ENCODE measurements at regions of chrX and their contacts with region 1.

Region 1: GRCh38 chrX:32788936-32789335 is 422.4 kb downstream of the DMD start:
- DNase-seq: no peak
- ATAC-seq: no peak
- H3K4me3 ChIP-seq: no peak overlapping the region
- H3K27ac ChIP-seq: no peak overlapping the region
- H3K4me1 ChIP-seq: no peaks in the 10 kb centered on the region
- H3K27me3 ChIP-seq: no peaks in the 10 kb centered on the region
- CTCF ChIP-seq: no peak
- POLR2A ChIP-seq: no peak
- RAD21 ChIP-seq: no peak

Region 2: DNA sequence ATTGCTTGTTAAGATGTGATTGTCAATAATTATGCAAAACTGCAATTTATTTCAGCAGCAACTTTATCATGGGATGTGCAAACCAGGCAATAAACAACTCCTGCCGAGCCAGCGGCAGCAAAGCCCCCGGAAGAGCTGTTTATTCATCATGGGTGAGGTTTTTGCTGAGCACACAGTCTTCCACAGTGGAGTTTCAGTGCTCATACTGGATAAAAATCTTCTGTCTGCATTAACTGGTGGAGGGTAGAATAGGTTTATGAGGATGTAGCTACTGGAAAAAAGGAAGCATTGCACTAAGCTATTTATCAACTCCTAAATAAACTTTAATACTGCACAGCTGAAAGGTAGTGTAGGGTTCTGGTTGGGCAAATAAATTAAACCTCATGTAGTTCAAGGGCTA is 1159.7 kb before region 1 on chrX:
- CTCF ChIA-PET with region 1: no interaction called
- POLR2A ChIA-PET with region 1: no interaction called
- dilution Hi-C with region 1: no loop called
- in situ Hi-C with region 1: no loop called
- intact Hi-C with region 1: no loop called
- DNase-seq: no peak
- ATAC-seq: no peak
- H3K4me3 ChIP-seq: no peak overlapping the region
- H3K27ac ChIP-seq: no peak overlapping the region
- H3K4me1 ChIP-seq: no peaks in the 10 kb centered on the region
- H3K27me3 ChIP-seq: peaks cover 2% of the 10 kb centered on the region; the same call in 1 of the 2 replicates
- CTCF ChIP-seq: no peak
- POLR2A ChIP-seq: no peak
- RAD21 ChIP-seq: no peak

Region 3: GRCh38 chrX:31679861-31680260 is 1109.1 kb before region 1 on chrX:
- CTCF ChIA-PET with region 1: no interaction called
- POLR2A ChIA-PET with region 1: no interaction called
- dilution Hi-C with region 1: no loop called
- in situ Hi-C with region 1: no loop called
- intact Hi-C with region 1: no loop called
- DNase-seq: no peak
- ATAC-seq: no peak
- H3K4me3 ChIP-seq: no peak overlapping the region
- H3K27ac ChIP-seq: no peak overlapping the region
- H3K4me1 ChIP-seq: no peaks in the 10 kb centered on the region
- H3K27me3 ChIP-seq: no peaks in the 10 kb centered on the region
- CTCF ChIP-seq: no peak
- POLR2A ChIP-seq: no peak
- RAD21 ChIP-seq: no peak

Region 4: GRCh38 chrX:32798990-32799389 is 10.1 kb after region 1 on chrX:
- CTCF ChIA-PET with region 1: no interaction called
- POLR2A ChIA-PET with region 1: no interaction called
- dilution Hi-C with region 1: no loop called
- in situ Hi-C with region 1: no loop called
- intact Hi-C with region 1: no loop called
- DNase-seq: no peak
- ATAC-seq: no peak
- H3K4me3 ChIP-seq: no peak overlapping the region
- H3K27ac ChIP-seq: no peak overlapping the region
- H3K4me1 ChIP-seq: no peaks in the 10 kb centered on the region
- H3K27me3 ChIP-seq: no peaks in the 10 kb centered on the region
- CTCF ChIP-seq: no peak
- POLR2A ChIP-seq: no peak
- RAD21 ChIP-seq: no peak

Region 5: GRCh38 chrX:33218819-33219218 is 429.9 kb after region 1 on chrX:
- CTCF ChIA-PET with region 1: no interaction called
- POLR2A ChIA-PET with region 1: no interaction called
- dilution Hi-C with region 1: no loop called
- in situ Hi-C with region 1: no loop called
- intact Hi-C with region 1: loop called (anchors 10 kb)
- DNase-seq: no peak
- ATAC-seq: no peak
- H3K4me3 ChIP-seq: no peak overlapping the region
- H3K27ac ChIP-seq: no peak overlapping the region
- H3K4me1 ChIP-seq: no peaks in the 10 kb centered on the region
- H3K27me3 ChIP-seq: no peaks in the 10 kb centered on the region
- CTCF ChIP-seq: no peak
- POLR2A ChIP-seq: no peak
- RAD21 ChIP-seq: no peak

Measured in IMR-90 (cell line).